Activated CD4-positive, alpha-beta memory T cell treated with anti-CD3 and anti-CD28 coated beads, Interleukin-2, amount 10 ng/mL, durations not matched to agents 7 days and 5 days (primary cell): ENCODE measurements at regions of chr16 and their contacts with region 1.

Region 1: GRCh38 chr16:684067-684794 is at the start of gene JMJD8:
- DNase-seq: peak; percentile 97
- H3K4me3 Mint-ChIP-seq: peak within 1 kb of the TSS; percentile 81
- H3K27ac Mint-ChIP-seq: peak within 1 kb of the TSS; percentile 64
- H3K4me1 Mint-ChIP-seq: peaks cover 49% of the 10 kb centered on the region
- H3K27me3 Mint-ChIP-seq: no peaks in the 10 kb centered on the region
- total RNA-seq, gene JMJD8: 27.1 to 27.2 TPM

Region 2: DNA sequence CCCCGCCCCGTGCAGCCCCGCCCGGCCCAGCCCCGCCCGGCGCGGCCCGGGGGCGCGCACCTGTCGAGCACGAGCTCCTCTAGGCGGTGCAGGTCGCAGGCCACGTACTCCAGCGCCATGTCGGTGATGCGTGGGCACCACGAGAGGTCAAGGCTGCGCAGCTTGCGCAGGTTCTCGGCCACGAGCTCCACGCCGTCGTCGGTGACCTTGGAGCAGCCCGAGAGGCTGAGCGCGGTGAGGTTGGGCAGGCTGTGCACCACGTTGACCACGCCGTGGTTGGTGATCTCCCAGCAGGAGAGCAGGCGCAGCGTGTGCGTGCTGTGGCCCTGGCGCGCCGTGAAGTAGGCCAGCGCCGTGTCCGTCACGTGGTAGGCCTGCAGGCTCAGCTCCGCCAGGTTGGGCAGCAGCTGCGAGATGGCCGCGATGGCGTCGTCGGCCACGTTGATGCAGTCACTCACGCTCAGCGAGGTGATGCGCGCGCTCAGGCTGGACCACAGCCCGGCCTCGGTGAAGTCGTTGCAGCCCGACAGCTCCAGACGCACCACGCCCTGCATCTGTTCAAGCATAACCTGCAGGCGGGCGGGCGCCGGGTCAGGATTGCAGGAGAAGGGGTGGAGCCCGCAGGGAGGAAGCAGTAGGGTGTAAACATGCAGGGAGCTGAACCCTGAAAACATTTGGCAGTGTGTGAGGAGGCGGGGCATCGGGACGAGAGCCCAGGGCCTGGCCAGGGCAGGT is 11.3 kb after region 1 on chr16:
- CTCF ChIA-PET with region 1: interaction called, 4 read pairs
- POLR2A ChIA-PET with region 1: interaction called, 35 read pairs
- DNase-seq: peak; percentile 81
- H3K4me3 Mint-ChIP-seq: peak overlapping the region; percentile 79
- H3K27ac Mint-ChIP-seq: peak overlapping the region; percentile 92
- H3K4me1 Mint-ChIP-seq: peaks cover 57% of the 10 kb centered on the region
- H3K27me3 Mint-ChIP-seq: peaks cover 8% of the 10 kb centered on the region